PC-9 (cell line): ENCODE measurements at regions of chr22 and their contacts with region 1.

Region 1: DNA sequence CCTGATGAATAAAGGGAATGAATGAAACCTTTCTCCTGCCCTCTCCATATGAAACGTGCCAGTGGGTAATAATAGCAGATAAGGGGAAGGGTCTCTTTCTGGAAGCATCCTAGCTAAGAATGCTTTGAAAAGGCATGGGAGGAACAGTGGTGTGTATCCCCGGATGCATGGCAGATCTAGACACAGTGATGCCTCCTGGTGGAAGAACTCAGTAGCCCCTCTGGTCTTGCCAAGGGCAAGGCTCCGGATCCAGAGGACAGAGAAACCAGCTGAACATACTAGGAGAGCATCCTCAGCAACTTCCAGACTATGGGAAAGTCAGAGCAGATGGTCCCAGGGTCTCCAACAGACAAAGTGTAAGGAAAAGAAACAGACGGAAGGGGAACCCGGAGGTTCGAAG is 6.4 kb downstream of the BAIAP2L2 start:
- DNase-seq: no peak
- H3K4me3 ChIP-seq: no peak overlapping the region
- H3K27ac ChIP-seq: no peak overlapping the region
- H3K4me1 ChIP-seq: no peaks in the 10 kb centered on the region
- H3K27me3 ChIP-seq: no peaks in the 10 kb centered on the region
- CTCF ChIP-seq: peak; percentile 45; the same call in 1 of the 2 replicates

Region 2: GRCh38 chr22:38353142-38353629 is 249.1 kb after region 1 on chr22:
- CTCF ChIA-PET with region 1: no interaction called
- POLR2A ChIA-PET with region 1: no interaction called
- intact Hi-C with region 1: loop called (anchors 5 kb)
- DNase-seq: peak; percentile 42 to 85
- H3K4me3 ChIP-seq: no peak overlapping the region
- H3K27ac ChIP-seq: no peak overlapping the region
- H3K4me1 ChIP-seq: peaks cover 8% of the 10 kb centered on the region
- H3K27me3 ChIP-seq: no peaks in the 10 kb centered on the region
- CTCF ChIP-seq: peak; percentile 100

Region 3: DNA sequence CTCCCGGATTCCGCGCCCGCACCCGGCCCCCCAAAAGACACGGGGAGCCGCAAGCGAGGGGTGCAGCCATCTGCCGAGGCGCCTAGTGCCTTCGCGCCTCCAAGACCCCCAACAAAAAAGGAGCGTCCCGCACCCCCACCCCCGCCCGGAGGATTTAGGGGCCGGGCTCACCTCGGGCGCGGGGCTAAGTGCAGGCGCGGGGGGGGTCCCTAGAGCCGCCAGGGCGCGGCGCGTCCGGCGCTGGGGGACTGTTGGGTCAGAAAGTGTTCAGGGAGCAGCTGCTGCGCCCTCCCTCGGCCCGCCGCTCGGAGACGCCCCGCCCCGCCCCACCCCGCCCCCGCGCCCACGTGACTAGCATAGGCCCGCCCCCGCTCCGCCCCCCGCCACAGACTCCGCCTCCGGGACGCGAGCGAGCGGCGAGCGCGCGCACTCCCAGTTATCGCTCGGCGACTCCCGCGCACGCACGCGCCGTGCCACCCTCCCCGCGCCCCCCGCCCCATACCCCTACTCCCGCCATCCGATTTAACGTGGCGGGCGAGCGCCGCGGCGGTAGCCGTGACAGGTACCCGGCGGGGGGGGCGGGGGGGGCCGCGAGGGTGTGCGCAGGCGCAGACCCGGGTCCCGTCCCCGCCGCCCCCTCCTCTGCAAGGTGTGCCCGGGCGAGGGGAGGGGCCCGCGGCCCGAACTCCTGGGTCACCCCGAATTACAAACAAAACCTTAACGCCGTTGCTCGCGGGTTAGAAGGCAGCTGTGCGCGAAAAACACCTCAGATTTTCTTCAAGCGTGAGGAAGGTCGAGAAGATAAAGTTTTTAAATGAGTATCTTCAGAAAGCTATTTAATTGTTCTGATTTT is 294.8 kb after region 1 on chr22:
- CTCF ChIA-PET with region 1: interaction called, 12 read pairs
- POLR2A ChIA-PET with region 1: no interaction called
- intact Hi-C with region 1: no loop called
- DNase-seq: peak; percentile 50 to 89
- H3K4me3 ChIP-seq: peak overlapping the region; percentile 99
- H3K27ac ChIP-seq: peak overlapping the region; percentile 56
- H3K4me1 ChIP-seq: peaks cover 30% of the 10 kb centered on the region
- H3K27me3 ChIP-seq: no peaks in the 10 kb centered on the region
- CTCF ChIP-seq: no peak

Region 4: DNA sequence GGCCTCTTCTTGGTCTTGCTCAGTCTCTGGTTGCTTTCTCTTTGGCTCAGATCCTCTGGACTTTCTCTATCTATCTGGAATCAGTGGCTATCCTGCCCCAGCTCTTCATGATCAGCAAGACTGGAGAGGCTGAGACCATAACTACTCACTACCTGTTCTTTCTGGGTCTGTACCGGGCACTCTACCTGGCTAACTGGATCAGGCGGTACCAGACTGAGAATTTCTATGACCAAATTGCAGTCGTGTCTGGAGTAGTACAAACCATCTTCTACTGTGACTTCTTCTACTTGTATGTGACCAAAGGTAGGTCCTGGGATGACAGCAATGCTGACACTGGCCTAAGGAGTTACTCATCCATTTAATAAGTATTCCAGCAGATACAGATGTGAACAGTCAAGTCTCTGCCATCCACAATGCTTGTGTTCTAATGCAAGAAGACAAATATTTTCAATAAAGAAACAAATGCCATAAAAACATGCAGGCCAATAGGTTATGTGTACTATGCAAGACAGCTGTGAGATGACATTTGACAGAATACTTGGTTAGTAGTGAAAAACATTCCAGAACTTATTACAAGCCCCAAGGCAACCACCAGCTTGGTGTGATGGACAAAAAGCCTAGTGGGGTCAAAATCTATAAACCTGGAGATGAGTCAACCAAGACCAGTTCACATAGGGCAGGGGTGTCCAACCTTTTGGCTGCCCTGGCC is 377.2 kb after region 1 on chr22:
- CTCF ChIA-PET with region 1: no interaction called
- POLR2A ChIA-PET with region 1: no interaction called
- intact Hi-C with region 1: no loop called
- DNase-seq: no peak
- H3K4me3 ChIP-seq: no peak overlapping the region
- H3K27ac ChIP-seq: no peak overlapping the region
- H3K4me1 ChIP-seq: no peaks in the 10 kb centered on the region
- H3K27me3 ChIP-seq: no peaks in the 10 kb centered on the region
- CTCF ChIP-seq: no peak

Region 5: DNA sequence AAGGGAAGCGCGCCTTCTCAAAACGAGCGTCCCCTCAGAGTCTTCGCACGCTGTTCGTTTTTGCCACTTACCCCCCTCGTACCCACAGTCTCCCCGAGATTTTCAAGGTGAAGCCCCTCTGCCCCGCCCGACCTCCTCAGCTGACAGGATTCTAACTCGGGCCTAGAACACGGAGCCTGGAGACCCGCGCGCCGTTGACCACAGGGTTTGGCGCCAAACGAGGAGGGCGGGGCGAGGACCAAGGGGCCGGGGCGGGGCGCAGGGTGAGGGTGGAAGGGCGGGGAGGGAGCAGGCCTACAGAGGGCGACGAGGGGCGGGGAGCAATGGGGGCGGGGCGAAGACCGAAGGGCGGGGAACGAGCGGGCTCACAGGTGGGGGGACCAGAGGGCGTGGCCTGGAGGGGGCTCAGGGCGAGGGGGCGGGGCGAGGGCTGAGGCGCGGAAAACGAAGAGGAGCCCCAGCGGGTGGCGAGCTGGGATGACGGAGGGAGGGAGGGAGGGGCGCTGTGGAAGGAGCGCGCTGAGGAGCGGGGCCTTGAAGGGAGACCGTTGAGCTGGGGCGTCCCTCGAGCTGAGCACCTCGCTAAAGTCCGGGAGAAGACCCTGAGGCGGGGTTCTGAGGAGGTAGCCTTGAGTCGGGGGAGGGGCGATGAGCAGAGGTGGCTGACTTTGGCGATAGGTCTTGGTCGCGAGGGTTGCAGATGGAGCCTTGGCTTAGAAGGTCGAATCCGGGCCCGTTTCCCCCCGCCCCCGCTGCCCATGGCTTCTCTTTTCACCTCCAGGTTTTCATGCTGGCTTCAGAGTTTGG is 466.1 kb after region 1 on chr22 and contains the start of gene DMC1:
- CTCF ChIA-PET with region 1: no interaction called
- POLR2A ChIA-PET with region 1: no interaction called
- intact Hi-C with region 1: loop called (anchors 5 kb)
- DNase-seq: peak; percentile 77 to 91
- H3K4me3 ChIP-seq: peak within 1 kb of the TSS; percentile 64
- H3K27ac ChIP-seq: no peak within 1 kb of the TSS
- H3K4me1 ChIP-seq: peaks cover 10% of the 10 kb centered on the region
- H3K27me3 ChIP-seq: no peaks in the 10 kb centered on the region
- CTCF ChIP-seq: no peak
- total RNA-seq, gene DMC1: 5.6 and 6.3 TPM in 2 replicates

Region 6: DNA sequence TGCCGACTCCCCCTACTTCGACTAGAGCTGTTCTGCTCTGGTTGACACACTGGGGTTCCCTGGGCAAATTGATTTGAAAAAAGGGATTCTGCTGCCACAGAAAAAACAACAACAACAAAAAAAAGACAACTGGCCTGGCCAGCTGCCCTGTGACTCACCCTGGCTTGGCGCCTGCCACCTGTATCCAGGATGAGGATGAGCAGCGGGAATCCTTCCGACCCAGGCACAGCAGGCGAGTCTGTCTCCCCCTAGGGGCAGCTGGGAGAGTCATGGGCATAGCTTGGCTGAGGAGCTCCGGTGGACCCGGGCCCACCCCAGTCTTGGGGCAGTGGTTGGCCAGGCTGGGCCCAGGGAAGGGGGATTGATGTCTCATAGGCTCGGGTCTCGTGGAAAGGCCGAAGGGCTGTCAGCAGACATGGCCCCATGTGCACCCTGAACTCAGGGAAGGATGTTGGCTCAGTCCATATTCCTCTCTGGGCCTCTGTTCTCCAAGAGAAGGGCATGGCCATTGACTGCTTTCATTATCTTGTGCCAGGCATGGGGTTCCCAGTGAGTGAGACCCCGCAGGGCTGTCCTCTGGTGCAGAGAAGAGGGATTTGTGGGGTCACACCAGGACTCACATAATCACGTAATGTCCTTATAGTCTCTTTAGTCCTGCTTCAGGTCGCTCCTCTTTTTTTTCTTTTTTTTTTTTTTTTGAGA is 662.1 kb after region 1 on chr22:
- CTCF ChIA-PET with region 1: no interaction called
- POLR2A ChIA-PET with region 1: no interaction called
- intact Hi-C with region 1: no loop called
- DNase-seq: peak; percentile 79 to 89
- H3K4me3 ChIP-seq: no peak overlapping the region
- H3K27ac ChIP-seq: no peak overlapping the region
- H3K4me1 ChIP-seq: peaks cover 26% of the 10 kb centered on the region
- H3K27me3 ChIP-seq: no peaks in the 10 kb centered on the region
- CTCF ChIP-seq: peak; percentile 98